HAP-1 (cell line): ENCODE measurements at regions of chr14 and their contacts with region 1.

Region 1: DNA sequence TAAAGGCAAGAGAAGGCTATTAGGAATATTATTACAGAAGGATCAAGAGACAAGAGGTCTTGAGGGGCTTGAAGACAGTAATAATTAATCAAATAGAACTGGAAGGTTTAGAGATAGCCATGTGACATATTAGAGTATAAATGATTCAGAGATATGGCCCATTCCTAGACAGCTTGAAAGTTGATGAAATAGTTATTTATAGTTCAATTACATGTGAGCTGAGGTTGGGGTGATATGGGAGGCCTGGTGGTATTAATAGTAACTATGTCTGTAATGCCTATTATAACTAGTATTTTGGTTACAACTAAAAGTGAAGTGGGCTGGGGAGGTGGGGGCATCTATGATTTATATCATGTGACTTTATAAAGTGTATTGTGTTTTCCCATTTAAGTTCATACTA is 14.1 kb upstream of the MIS18BP1 start:
- DNase-seq: no peak
- H3K4me3 ChIP-seq: no peak overlapping the region
- H3K4me1 ChIP-seq: no peaks in the 10 kb centered on the region
- H3K27me3 ChIP-seq: no peaks in the 10 kb centered on the region

Region 2: DNA sequence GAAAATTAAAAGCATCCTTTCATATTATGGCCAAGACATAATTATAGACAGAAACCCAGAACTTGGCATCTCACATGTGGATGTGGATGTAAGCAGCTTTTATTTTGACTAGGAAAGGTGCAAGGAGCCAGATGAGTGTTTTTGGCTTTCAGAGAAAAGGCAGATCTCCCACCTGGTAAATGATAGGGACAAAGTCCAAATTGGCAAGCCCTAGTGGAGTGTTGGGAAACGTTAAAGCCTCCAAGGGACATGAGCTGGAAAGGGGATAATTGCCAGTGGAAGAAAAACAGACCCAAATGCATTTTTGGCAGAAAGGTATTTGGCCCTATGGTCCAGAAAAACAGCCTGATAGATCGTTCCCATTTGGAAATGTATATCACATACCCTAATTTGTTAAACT is 365.4 kb before region 1 on chr14:
- in situ Hi-C with region 1: loop called (anchors 10 kb)
- DNase-seq: no peak
- H3K4me3 ChIP-seq: no peak overlapping the region
- H3K4me1 ChIP-seq: peaks cover 7% of the 10 kb centered on the region
- H3K27me3 ChIP-seq: no peaks in the 10 kb centered on the region